ENCODE measurements at regions of chr2 and their contacts with region 1.

Region 1: GRCh38 chr2:176140513-176141317 is 10.6 kb upstream of the HOXD4 start:
- DNase-seq: peak; percentile 76 to 89
- ATAC-seq: peak; percentile 81 to 86 (median 82)
- H3K4me3 ChIP-seq: peak overlapping the region; percentile 89
- H3K27ac ChIP-seq: peak overlapping the region; percentile 93
- H3K4me1 ChIP-seq: peaks cover 18% of the 10 kb centered on the region
- H3K27me3 ChIP-seq: no peaks in the 10 kb centered on the region
- CTCF ChIP-seq: peak; percentile 97

Region 2: GRCh38 chr2:176269319-176270099 is 128.8 kb after region 1 on chr2 and contains the start of gene MTX2:
- intact Hi-C with region 1: loop called in 1 of 2 experiments (anchors 5 kb)
- DNase-seq: peak; percentile 75 to 87
- ATAC-seq: peak; percentile 98 to 100 (median 100)
- H3K4me3 ChIP-seq: peak within 1 kb of the TSS; percentile 83
- H3K27ac ChIP-seq: peak within 1 kb of the TSS; percentile 93
- H3K4me1 ChIP-seq: peaks cover 22% of the 10 kb centered on the region
- H3K27me3 ChIP-seq: no peaks in the 10 kb centered on the region
- CTCF ChIP-seq: peak; percentile 21
- total RNA-seq, gene MTX2: 33.2 to 44.1 (median 37.4) TPM

Region 3: DNA sequence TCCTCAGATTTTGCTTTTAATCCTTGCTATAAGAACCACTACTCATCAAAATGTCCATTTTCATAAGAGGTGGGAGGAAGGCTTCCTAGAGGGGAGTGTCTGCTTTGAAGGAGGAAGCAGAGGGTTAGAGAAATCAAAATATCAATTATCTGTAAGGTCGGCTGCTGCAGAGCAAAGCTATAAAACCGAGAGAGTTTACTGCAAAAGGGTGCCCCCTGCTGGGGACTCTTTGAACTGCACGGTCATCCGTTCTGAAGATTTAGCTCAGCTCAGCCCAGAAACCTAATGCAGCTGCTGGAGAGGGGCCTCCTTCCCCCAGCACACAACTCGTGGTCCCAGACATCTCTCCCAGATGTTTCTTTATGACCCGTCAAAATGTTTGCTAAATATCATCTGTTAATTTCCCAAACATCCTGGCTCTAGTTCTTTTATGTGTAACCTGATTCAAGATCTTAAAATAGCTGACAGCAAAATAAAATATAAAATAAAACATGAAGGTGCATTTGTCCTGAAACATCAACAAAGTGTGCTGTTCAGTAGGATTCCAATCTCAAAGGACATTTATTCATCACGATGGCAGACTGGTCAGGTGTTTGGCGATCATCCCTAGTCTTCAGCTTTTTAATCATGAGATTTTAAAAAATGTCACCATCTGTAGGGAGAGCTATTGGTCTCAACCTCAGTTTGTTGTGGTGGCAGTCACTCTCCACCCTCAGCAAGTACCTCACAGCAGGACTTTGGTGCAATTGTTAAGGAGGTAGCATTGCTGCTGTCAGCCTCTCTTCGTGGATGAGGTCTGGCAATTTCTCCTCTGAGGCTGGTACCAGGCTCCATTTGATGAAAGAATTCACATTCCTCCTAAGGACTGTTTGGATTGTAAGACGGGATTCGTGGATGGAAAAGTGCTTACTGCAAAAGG is 314.4 kb after region 1 on chr2:
- intact Hi-C with region 1: loop called (anchors 2 to 5 kb)
- DNase-seq: peak; percentile 77 to 88
- ATAC-seq: peak; percentile 64 to 89 (median 84)
- H3K4me3 ChIP-seq: no peak overlapping the region
- H3K27ac ChIP-seq: peak overlapping the region; percentile 19
- H3K4me1 ChIP-seq: peaks cover 3% of the 10 kb centered on the region
- H3K27me3 ChIP-seq: no peaks in the 10 kb centered on the region
- CTCF ChIP-seq: peak; percentile 98

Region 4: GRCh38 chr2:176534798-176535466 is 394.2 kb after region 1 on chr2:
- intact Hi-C with region 1: loop called in 1 of 2 experiments (anchors 5 kb)
- DNase-seq: no peak
- ATAC-seq: peak in 3 of 4 donors; percentile 58 to 90 (median 90)
- H3K4me3 ChIP-seq: no peak overlapping the region
- H3K27ac ChIP-seq: peak overlapping the region; percentile 25
- H3K4me1 ChIP-seq: peaks cover 21% of the 10 kb centered on the region
- H3K27me3 ChIP-seq: no peaks in the 10 kb centered on the region
- CTCF ChIP-seq: no peak

Region 5: DNA sequence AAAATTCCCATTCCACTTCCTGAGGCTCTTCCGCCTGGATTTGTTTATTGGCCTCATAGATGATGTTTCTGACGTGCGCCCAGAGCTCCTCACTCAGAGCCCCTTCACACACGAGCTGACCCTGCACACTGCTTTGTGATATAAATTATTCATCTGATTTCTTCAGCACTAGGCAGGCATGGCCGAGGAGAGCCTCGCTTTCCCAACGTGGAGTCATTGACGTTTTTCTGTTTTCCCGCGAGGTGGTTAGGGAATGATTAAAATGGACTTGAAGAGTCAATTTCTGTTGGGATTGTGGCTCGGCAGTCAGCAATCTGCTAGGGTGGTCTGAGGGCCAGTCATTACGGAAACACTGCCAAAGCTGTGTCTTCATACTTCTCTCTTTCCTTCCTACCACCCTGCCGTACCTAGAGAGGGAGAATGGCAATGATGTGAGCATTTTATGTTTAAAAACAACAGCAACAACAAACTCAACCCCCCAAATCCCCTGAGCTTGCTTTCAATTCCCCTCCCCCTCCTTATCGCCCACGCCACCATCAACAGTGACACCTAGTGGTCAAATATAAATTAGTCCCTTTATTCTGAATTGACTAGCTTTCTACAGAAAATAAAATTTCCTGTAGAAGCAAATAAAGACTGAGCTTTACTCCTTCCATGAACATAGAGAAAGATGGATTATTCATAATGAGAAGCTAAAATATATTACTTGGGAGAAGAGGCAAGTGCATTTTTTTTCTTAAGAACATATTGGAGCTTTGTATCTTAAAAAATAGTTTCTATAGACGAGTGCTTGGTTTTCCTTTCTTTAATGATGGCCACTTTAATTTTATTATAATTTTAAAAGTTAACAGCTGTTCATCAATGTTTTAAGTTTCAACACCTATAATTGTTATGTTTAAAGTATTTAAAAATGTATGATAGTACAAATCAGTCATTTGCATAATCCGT is 413.7 kb after region 1 on chr2:
- intact Hi-C with region 1: loop called (anchors 1 to 5 kb)
- DNase-seq: no peak
- ATAC-seq: peak; percentile 61 to 91 (median 84)
- H3K4me3 ChIP-seq: peak overlapping the region; percentile 74
- H3K27ac ChIP-seq: peak overlapping the region; percentile 57
- H3K4me1 ChIP-seq: peaks cover 12% of the 10 kb centered on the region
- H3K27me3 ChIP-seq: no peaks in the 10 kb centered on the region
- CTCF ChIP-seq: peak; percentile 82

Region 6: GRCh38 chr2:176638167-176639015 is 497.7 kb after region 1 on chr2:
- intact Hi-C with region 1: loop called in 1 of 2 experiments (anchors 5 kb)
- DNase-seq: peak; percentile 77 to 83
- ATAC-seq: peak; percentile 89 to 98 (median 92)
- H3K4me3 ChIP-seq: peak overlapping the region; percentile 87
- H3K27ac ChIP-seq: peak overlapping the region; percentile 39
- H3K4me1 ChIP-seq: no peaks in the 10 kb centered on the region
- H3K27me3 ChIP-seq: peaks cover 0 to 16% (median 0%) of the 10 kb centered on the region in 3 donors
- CTCF ChIP-seq: peak; percentile 88